ENCODE measurements at regions of chr6 and their contacts with region 1.

Region 1: DNA sequence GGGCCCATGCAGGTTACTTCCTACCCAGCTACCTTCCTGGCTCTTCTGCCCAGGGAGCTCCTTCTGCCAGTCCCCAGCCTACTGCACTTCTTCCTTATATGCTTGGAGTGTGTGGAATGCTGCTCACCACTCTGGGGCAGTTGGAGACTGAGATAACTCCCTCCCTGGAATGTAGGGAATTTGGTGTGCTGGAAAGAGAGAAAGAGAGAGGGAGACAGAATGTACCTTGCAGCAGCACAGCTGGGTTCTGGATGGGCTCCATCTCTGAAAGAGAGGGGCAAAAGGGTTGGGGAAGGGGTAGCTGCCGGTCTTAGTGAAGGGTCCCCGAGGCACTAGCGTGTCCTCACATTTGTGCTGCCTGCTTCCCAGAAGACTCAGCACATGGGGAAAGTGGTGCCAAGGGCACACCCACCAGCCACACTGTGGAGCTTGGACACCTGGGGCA is 40.2 kb upstream of the DDR1 start:
- H3K4me3 ChIP-seq: no peak overlapping the region
- H3K27ac ChIP-seq: no peak overlapping the region
- H3K4me1 ChIP-seq: peaks cover 14% of the 10 kb centered on the region
- CTCF ChIP-seq: peak; percentile 42; the same call in 1 of the 2 replicates

Region 2: GRCh38 chr6:30828027-30828960 is 15.8 kb before region 1 on chr6:
- CTCF ChIA-PET with region 1: interaction called, 60 read pairs
- POLR2A ChIA-PET with region 1: interaction called, 4 read pairs
- H3K4me3 ChIP-seq: no peak overlapping the region
- H3K27ac ChIP-seq: no peak overlapping the region
- H3K4me1 ChIP-seq: no peaks in the 10 kb centered on the region
- CTCF ChIP-seq: peak; percentile 79

Region 3: GRCh38 chr6:30857549-30857948 is 13.4 kb after region 1 on chr6:
- CTCF ChIA-PET with region 1: interaction called, 22 read pairs
- POLR2A ChIA-PET with region 1: interaction called, 4 read pairs
- H3K4me3 ChIP-seq: no peak overlapping the region
- H3K27ac ChIP-seq: no peak overlapping the region
- H3K4me1 ChIP-seq: peaks cover 10% of the 10 kb centered on the region
- CTCF ChIP-seq: no peak

Region 4: GRCh38 chr6:30877419-30878371 is 33.6 kb after region 1 on chr6:
- CTCF ChIA-PET with region 1: interaction called, 332 read pairs
- POLR2A ChIA-PET with region 1: interaction called, 6 read pairs
- H3K4me3 ChIP-seq: peak overlapping the region; percentile 20
- H3K27ac ChIP-seq: no peak overlapping the region; the same call in 1 of the 2 replicates
- H3K4me1 ChIP-seq: no peaks in the 10 kb centered on the region; the same call in 1 of the 2 replicates
- CTCF ChIP-seq: peak; percentile 89

Measured in HEK293 (cell line).